PC-3 (cell line): ENCODE measurements at regions of chr1 and their contacts with region 1.

Region 1: DNA sequence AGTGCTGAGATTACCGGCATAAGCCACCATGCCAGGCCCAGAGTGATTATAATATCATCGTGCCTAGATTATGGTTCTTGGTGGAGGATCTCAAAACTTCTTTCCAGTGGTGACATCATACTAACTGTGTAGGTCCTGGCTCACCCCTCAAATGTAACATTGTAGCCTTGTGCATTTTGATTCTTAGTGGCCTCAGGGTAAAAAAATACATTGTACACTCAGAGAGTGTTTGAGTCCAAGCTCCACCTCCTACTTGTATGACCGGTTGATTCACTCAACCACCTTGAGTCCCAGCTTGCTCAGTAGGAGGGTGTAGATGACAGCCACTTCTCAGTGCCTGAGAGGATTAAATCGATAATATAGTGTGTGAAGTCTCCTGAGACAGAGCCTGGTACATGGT is 38.3 kb downstream of the NCMAP start:
- DNase-seq: peak; percentile 80
- ATAC-seq: peak; percentile 48
- H3K4me3 ChIP-seq: no peak overlapping the region
- H3K27ac ChIP-seq: no peak overlapping the region
- H3K4me1 ChIP-seq: peaks cover 26% of the 10 kb centered on the region
- H3K27me3 ChIP-seq: no peaks in the 10 kb centered on the region
- CTCF ChIP-seq: no peak

Region 2: DNA sequence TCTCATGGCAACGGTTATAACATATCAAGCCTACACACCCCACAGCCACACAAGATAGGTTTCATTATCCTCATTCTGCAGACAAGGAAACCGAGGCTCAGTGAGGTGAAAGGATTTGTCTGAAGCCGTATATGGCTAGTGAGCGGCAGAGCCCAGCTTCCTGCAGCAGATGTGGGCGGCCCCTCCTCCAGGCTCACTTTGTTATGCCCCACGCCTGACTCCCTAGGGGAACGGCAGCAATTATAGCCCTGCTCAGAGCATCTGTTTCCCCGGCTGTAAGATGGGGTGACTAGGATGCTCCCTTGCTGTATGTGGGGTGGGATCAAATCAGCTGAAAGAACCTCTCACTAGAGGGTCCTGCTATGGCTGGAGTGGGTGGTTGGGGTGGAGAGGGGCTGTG is 252.9 kb before region 1 on chr1:
- CTCF ChIA-PET with region 1: no interaction called
- POLR2A ChIA-PET with region 1: no interaction called
- intact Hi-C with region 1: no loop called
- DNase-seq: no peak
- ATAC-seq: no peak
- H3K4me3 ChIP-seq: no peak overlapping the region
- H3K27ac ChIP-seq: no peak overlapping the region
- H3K4me1 ChIP-seq: no peaks in the 10 kb centered on the region
- H3K27me3 ChIP-seq: no peaks in the 10 kb centered on the region
- CTCF ChIP-seq: no peak

Region 3: DNA sequence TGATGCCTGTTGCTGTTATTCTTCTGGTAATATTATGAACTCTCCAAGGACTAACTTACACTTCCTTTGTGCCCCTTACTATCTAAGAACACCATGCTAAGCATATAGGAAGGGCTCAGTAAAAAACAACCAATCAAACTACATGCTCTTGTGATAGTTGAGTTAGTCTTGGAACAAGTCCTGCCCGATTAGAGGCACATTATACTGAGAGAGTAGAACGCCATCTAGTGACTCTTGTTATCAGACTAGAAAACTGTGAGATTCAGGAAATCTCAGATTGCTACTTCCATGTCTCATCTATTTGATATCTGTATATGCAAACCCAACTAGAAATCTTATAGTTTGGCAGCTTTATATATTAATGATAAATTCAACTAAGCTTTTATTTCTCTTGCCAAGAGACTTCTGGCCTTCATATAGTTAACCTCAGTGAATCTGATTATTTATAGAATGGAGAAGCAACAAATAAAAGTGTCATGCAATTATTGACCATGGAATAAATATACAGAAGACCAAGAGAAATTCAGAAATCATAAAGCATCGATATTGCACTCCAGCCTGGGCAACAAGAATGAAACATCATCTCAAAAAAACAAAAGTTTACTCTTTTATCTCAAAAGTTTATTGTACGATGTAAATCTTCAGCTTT is 41.2 kb after region 1 on chr1:
- CTCF ChIA-PET with region 1: no interaction called
- POLR2A ChIA-PET with region 1: no interaction called
- intact Hi-C with region 1: loop called (anchors 1 kb)
- DNase-seq: peak; percentile 85
- ATAC-seq: peak; percentile 82
- H3K4me3 ChIP-seq: no peak overlapping the region
- H3K27ac ChIP-seq: no peak overlapping the region
- H3K4me1 ChIP-seq: peaks cover 11% of the 10 kb centered on the region; the same call in 1 of the 2 replicates
- H3K27me3 ChIP-seq: no peaks in the 10 kb centered on the region
- CTCF ChIP-seq: peak; percentile 88

Region 4: DNA sequence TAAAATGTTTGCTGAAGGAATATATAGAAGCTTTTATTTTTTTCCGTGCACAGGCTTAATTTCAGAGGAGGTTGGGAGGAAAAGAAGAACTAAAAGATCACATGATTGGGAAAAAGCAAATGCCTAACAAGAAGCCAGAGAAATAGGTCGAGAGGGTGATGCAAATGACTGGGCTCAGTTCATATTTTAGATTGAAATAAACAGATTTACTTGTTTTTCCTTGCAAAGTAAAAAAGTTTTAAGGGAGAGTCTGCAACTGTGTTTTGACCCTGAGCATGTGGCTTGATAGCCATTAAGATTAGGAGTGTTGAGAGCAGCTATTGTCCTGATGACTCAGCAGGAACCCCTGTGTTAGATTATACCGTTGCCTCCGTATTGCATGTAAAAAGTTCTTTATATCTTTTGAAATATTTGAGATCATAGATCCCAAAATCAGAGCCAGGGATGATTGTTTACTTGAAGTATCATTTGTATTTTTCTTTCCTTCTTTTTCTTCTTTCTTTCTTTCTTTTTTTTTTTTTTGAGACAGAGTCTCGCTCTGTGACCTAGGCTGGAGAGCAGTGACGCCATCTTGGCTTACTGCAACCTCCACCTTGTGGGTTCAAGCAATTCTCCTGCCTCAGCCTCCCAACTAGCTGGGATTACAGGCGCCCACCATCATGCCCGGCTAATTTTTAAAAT is 171.3 kb after region 1 on chr1:
- CTCF ChIA-PET with region 1: no interaction called
- POLR2A ChIA-PET with region 1: no interaction called
- intact Hi-C with region 1: no loop called
- DNase-seq: no peak
- ATAC-seq: no peak
- H3K4me3 ChIP-seq: no peak overlapping the region
- H3K27ac ChIP-seq: no peak overlapping the region
- H3K4me1 ChIP-seq: peaks cover 11% of the 10 kb centered on the region
- H3K27me3 ChIP-seq: no peaks in the 10 kb centered on the region
- CTCF ChIP-seq: no peak